PC-3 (cell line): ENCODE measurements at regions of chr6 and their contacts with region 1.

Region 1: GRCh38 chr6:106223300-106223930 is 102.1 kb downstream of the ATG5 start:
- DNase-seq: peak; percentile 81
- ATAC-seq: peak; percentile 57; the same call in 1 of the 2 replicates
- H3K4me3 ChIP-seq: no peak overlapping the region
- H3K27ac ChIP-seq: no peak overlapping the region
- H3K4me1 ChIP-seq: peaks cover 21% of the 10 kb centered on the region
- H3K27me3 ChIP-seq: no peaks in the 10 kb centered on the region
- CTCF ChIP-seq: peak; percentile 78

Region 2: GRCh38 chr6:105484238-105485161 is 738.9 kb before region 1 on chr6:
- CTCF ChIA-PET with region 1: interaction called, 3 read pairs
- POLR2A ChIA-PET with region 1: no interaction called
- intact Hi-C with region 1: loop called (anchors 2 kb)
- DNase-seq: peak; percentile 79
- ATAC-seq: peak; percentile 68
- H3K4me3 ChIP-seq: no peak overlapping the region
- H3K27ac ChIP-seq: 0 out of 2 replicates have a peak overlapping the region, but pooled peaks have one; percentile 4
- H3K4me1 ChIP-seq: peaks cover 24% of the 10 kb centered on the region
- H3K27me3 ChIP-seq: no peaks in the 10 kb centered on the region
- CTCF ChIP-seq: peak; percentile 88

Region 3: GRCh38 chr6:106097411-106098231 is 125.8 kb before region 1 on chr6:
- CTCF ChIA-PET with region 1: no interaction called
- POLR2A ChIA-PET with region 1: no interaction called
- intact Hi-C with region 1: loop called (anchors 2 kb)
- DNase-seq: peak; percentile 23
- ATAC-seq: peak; percentile 32
- H3K4me3 ChIP-seq: peak overlapping the region; percentile 78
- H3K27ac ChIP-seq: peak overlapping the region; percentile 51
- H3K4me1 ChIP-seq: peaks cover 30% of the 10 kb centered on the region
- H3K27me3 ChIP-seq: no peaks in the 10 kb centered on the region
- CTCF ChIP-seq: no peak

Region 4: GRCh38 chr6:106145741-106146227 is 77.6 kb before region 1 on chr6:
- CTCF ChIA-PET with region 1: no interaction called
- POLR2A ChIA-PET with region 1: no interaction called
- intact Hi-C with region 1: no loop called
- DNase-seq: peak; percentile 65
- ATAC-seq: no peak; the same call in 1 of the 2 replicates
- H3K4me3 ChIP-seq: no peak overlapping the region
- H3K27ac ChIP-seq: peak overlapping the region; percentile 59; the same call in 1 of the 2 replicates
- H3K4me1 ChIP-seq: peaks cover 33% of the 10 kb centered on the region
- H3K27me3 ChIP-seq: no peaks in the 10 kb centered on the region
- CTCF ChIP-seq: no peak

Region 5: GRCh38 chr6:106194949-106195921 is 28.2 kb before region 1 on chr6:
- CTCF ChIA-PET with region 1: no interaction called
- POLR2A ChIA-PET with region 1: no interaction called
- intact Hi-C with region 1: no loop called
- DNase-seq: peak; percentile 74
- ATAC-seq: peak; percentile 45
- H3K4me3 ChIP-seq: peak overlapping the region; percentile 10; the same call in 1 of the 2 replicates
- H3K27ac ChIP-seq: peak overlapping the region; percentile 56
- H3K4me1 ChIP-seq: peaks cover 35% of the 10 kb centered on the region
- H3K27me3 ChIP-seq: no peaks in the 10 kb centered on the region
- CTCF ChIP-seq: no peak

Region 6: DNA sequence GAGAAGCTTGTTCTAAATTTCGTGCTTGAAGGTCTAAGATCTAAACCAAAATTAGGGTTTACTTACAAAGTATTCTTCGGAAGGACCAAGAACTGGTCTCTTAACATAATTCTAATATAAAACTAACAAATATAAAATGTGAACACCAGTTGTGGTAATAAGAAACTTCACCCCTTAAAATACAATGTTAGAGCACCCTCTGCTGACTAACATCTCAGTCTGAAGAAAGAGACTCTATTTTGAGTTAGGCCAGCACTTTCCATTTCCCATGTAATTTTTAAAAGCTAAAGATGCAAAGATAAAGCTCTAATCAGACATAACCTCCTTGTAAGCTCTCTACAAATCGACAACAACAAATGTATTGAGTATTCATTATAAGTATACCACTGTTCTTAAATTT is 77.5 kb after region 1 on chr6:
- CTCF ChIA-PET with region 1: interaction called, 3 read pairs
- POLR2A ChIA-PET with region 1: no interaction called
- intact Hi-C with region 1: loop called (anchors 2 kb)
- DNase-seq: peak; percentile 59
- ATAC-seq: no peak
- H3K4me3 ChIP-seq: no peak overlapping the region
- H3K27ac ChIP-seq: no peak overlapping the region
- H3K4me1 ChIP-seq: no peaks in the 10 kb centered on the region
- H3K27me3 ChIP-seq: no peaks in the 10 kb centered on the region
- CTCF ChIP-seq: peak; percentile 73

Region 7: GRCh38 chr6:106397431-106397830 is 174.0 kb after region 1 on chr6:
- CTCF ChIA-PET with region 1: no interaction called
- POLR2A ChIA-PET with region 1: no interaction called
- intact Hi-C with region 1: no loop called
- DNase-seq: no peak
- ATAC-seq: no peak
- H3K4me3 ChIP-seq: no peak overlapping the region
- H3K27ac ChIP-seq: no peak overlapping the region
- H3K4me1 ChIP-seq: peaks cover 4% of the 10 kb centered on the region; the same call in 1 of the 2 replicates
- H3K27me3 ChIP-seq: no peaks in the 10 kb centered on the region
- CTCF ChIP-seq: no peak